ENCODE measurements at regions of chr10 and their contacts with region 1.

Region 1: DNA sequence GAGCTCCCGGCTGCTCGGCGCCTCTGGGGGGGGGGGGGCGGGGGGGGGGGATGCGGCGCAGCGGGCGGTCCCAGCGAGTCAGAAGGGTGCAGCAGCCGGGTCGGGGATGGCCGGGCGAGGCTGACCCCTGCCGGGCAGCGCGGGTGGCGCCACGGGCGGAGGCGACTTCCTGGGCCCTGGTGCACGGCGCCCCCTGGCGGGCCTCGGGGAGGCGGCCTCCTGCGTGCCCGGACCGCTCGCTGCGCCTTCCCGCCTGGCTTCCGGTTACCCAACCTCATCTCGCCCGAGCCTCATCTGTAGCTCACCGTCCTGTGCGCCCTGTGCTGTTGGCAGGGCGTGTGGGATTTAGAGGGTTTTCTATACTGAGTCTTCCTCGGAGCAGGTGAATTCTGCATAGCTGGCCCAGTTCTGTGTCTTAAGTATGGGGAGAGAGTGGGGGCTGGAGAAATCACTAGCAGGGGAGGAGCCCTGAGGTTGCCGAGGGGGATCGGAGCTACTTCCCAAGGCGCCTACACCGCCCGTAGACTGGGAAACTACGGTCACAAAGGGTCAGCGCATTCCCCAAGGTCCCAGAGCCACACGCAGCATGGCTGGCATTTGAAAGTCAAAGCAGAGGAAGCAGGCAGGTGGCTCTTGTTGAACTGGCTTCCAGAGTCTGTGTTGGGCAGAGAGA is 28.3 kb upstream of the WDFY4 start:
- DNase-seq: peak; percentile 97

Region 2: GRCh38 chr10:48551861-48552591 is 104.4 kb before region 1 on chr10:
- intact Hi-C with region 1: loop called (anchors 1 kb)
- DNase-seq: peak; percentile 20

Region 3: DNA sequence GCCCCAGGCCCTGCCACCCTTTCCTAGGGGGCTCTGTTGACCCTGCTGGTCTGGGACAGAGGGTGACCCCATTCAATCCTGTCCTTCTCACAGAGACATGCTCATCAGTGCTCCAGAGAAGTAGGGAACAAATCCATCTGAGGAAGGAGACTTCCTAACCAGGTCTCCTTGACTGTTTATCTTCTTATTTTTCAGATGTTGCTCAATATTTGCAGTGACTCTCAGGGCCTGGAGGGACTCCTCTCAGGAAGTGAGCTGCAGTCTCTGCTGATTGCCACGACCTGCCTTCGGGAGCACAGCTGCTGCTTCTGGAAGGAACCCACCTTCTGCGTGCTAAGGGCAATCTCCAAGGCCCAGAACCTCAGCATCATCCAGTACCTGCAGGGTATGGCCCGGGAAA is 69.3 kb after region 1 on chr10:
- intact Hi-C with region 1: no loop called
- DNase-seq: no peak

Region 4: DNA sequence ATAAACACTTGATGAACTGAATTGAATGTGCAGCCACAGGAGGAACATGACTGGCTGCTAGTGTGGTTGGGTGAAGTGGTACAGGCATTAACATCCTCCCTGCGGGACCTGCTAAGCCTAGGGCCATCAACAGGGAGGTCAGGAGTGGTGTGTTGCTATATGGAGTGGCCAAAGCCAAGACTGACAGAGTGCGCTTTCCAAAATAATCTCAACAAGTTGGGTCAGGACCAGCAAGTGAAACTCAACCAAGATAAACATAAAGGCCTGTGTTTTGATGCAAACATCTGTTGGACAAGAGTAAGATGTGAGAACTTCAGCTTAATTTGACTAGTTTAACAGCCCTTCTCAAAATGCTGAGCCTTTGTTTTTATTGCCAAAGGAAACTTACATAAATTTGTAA is 126.0 kb after region 1 on chr10:
- intact Hi-C with region 1: loop called (anchors 10 kb)
- DNase-seq: no peak

Region 5: DNA sequence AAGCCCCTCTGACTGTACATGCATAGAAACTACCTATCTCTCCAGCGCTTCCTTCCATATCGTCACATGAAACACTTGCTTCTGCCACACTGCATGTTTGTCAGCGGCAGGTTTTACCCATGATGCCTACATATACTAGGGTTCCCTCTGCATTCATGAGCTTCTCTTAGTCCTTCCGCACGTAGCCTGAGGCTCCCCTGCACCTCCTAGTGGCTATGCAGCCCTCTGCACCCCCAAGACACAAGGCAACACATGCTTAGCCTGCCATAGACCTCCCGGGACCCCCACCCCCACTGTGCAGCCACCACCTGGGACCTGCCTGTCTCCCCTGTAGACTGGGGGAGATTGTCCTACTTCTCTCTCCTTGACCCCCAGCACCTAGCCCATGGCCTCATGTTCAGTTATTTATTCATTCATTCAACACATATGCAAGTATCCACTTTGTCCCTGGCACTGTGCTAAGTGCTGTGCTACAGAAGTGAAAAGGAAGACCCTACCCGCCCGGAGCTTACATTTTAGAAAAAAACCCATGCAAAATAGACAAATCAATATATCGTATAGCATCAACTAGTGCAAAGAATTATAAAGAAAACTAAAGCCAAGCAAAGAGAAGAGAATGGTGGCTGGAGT is 508.3 kb after region 1 on chr10:
- intact Hi-C with region 1: loop called (anchors 5 kb)
- DNase-seq: no peak